T-cell (primary cell): ENCODE measurements at regions of chr17 and their contacts with region 1.

Region 1: DNA sequence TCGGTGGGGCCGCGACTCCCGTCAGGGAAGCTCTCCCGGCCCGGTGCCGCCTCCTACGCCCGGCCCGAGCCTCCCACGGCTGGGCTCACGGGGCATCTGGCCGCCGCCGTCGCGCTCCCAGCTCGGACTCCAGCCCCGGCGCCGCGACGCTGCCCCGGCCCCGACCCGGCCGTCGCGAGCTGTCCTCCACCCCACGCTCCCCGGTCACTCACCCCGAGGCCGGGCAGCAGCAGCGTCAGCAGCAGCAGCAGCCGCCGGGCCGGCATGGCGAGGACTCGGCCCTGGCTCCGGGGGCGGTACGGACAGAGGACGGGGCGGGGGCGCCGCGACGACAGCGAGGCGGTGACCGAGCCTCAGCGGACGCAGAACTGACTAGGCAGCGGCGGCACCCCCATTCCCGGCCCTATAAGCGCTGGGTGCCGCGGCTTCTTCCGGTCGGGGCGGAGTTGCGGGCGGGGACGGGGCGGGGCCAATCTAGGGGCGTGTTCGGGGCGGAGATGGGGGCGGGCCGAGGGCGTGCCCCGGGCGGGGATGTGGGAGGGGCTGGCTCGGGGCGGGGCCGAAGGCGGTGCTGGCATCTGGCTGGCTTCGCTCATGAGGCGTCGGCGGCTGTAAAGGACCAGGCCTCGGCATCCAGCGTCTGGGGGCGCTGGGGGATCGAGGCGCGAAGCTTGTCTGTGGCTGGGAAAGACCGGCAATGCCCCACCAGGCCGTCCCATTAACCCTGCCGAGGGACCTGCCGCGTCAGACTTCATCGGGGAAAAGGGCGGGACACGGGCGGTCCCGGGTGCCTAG is at the start of gene ERN1:
- DNase-seq: peak; percentile 78 to 94 (median 87)
- ATAC-seq: peak; percentile 86 to 90 (median 88)
- H3K4me3 ChIP-seq: peak within 1 kb of the TSS; percentile 79 to 85
- H3K4me3 Mint-ChIP-seq: peak within 1 kb of the TSS; percentile 88 to 94 (median 93)
- H3K27ac ChIP-seq: peak within 1 kb of the TSS; percentile 95
- H3K27ac Mint-ChIP-seq: peak within 1 kb of the TSS; percentile 94 to 95
- H3K4me1 ChIP-seq: peaks cover 17 to 34% of the 10 kb centered on the region in 2 experiments
- H3K4me1 Mint-ChIP-seq: peaks cover 44 to 57% (median 49%) of the 10 kb centered on the region in 3 donors
- H3K27me3 ChIP-seq: no peaks in the 10 kb centered on the region
- H3K27me3 Mint-ChIP-seq: no peaks in the 10 kb centered on the region
- total RNA-seq, gene ERN1: 71.2 to 146 (median 112) TPM

Region 2: GRCh38 chr17:63919311-63919723 is 210.6 kb before region 1 on chr17:
- CTCF ChIA-PET with region 1: interaction called, 3 to 20 read pairs
- POLR2A ChIA-PET with region 1: no interaction called
- DNase-seq: peak; percentile 37 to 89 (median 61)
- ATAC-seq: peak; percentile 91 to 99 (median 94)
- H3K4me3 ChIP-seq: no peak overlapping the region
- H3K4me3 Mint-ChIP-seq: no peak overlapping the region
- H3K27ac ChIP-seq: no peak overlapping the region
- H3K27ac Mint-ChIP-seq: peak overlapping the region; percentile 5 to 69
- H3K4me1 ChIP-seq: peaks cover 0 to 10% of the 10 kb centered on the region in 2 experiments
- H3K4me1 Mint-ChIP-seq: peaks cover 8 to 13% (median 9%) of the 10 kb centered on the region in 3 donors
- H3K27me3 ChIP-seq: peaks cover 0 to 7% of the 10 kb centered on the region in 2 experiments
- H3K27me3 Mint-ChIP-seq: peaks cover 3 to 4% of the 10 kb centered on the region in 2 donors

Region 3: DNA sequence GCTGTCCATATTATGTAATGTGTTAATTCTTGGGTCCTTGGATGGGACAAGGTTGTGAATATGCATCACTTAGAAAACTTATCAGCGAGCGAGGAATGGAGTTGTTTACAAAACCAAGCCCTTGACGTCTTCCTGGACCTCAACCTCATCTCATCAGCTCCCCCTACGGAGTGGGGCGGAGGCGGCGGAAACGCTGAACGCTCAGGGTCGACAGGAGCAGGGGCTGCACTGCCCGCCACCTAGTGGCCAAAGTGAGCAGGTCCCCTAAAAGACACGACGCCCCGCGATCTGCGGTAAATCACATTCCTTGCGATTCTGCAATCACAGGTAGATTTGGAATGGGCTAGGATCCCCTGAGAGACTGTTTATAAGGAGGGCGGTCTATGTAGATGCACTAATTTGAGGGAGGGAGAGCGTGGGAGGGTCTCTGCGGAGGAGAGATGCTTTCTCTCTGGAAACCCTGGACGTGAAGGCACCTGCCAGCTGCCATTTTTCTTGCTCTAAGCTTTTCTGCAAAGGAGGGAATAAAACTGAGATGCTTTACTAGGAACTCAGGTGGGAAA is 104.1 kb before region 1 on chr17:
- CTCF ChIA-PET with region 1: interaction called, 62 to 226 read pairs
- POLR2A ChIA-PET with region 1: interaction called, 4 to 6 read pairs
- DNase-seq: peak; percentile 87 to 98 (median 96)
- ATAC-seq: peak; percentile 84 to 87 (median 87)
- H3K4me3 ChIP-seq: peak overlapping the region; percentile 7 to 30
- H3K4me3 Mint-ChIP-seq: peak overlapping the region; percentile 76 to 80 (median 76)
- H3K27ac ChIP-seq: peak overlapping the region; percentile 98
- H3K27ac Mint-ChIP-seq: peak overlapping the region; percentile 96 to 100
- H3K4me1 ChIP-seq: peaks cover 39 to 71% of the 10 kb centered on the region in 2 experiments
- H3K4me1 Mint-ChIP-seq: peaks cover 69 to 75% (median 72%) of the 10 kb centered on the region in 3 donors
- H3K27me3 ChIP-seq: no peaks in the 10 kb centered on the region
- H3K27me3 Mint-ChIP-seq: no peaks in the 10 kb centered on the region

Region 4: GRCh38 chr17:64056269-64057005 is 73.5 kb before region 1 on chr17:
- CTCF ChIA-PET with region 1: interaction called, 3 to 107 read pairs
- POLR2A ChIA-PET with region 1: interaction called in 1 of 2 experiments, 7 read pairs
- DNase-seq: no peak
- ATAC-seq: peak; percentile 22 to 43 (median 38)
- H3K4me3 ChIP-seq: no peak overlapping the region
- H3K4me3 Mint-ChIP-seq: peak overlapping the region in 1 of 3 donors; percentile 5
- H3K27ac ChIP-seq: peak overlapping the region; percentile 34
- H3K27ac Mint-ChIP-seq: peak overlapping the region; percentile 86 to 91
- H3K4me1 ChIP-seq: peaks cover 9 to 47% of the 10 kb centered on the region in 2 experiments
- H3K4me1 Mint-ChIP-seq: peaks cover 30 to 88% (median 34%) of the 10 kb centered on the region in 3 donors
- H3K27me3 ChIP-seq: no peaks in the 10 kb centered on the region
- H3K27me3 Mint-ChIP-seq: no peaks in the 10 kb centered on the region

Region 5: DNA sequence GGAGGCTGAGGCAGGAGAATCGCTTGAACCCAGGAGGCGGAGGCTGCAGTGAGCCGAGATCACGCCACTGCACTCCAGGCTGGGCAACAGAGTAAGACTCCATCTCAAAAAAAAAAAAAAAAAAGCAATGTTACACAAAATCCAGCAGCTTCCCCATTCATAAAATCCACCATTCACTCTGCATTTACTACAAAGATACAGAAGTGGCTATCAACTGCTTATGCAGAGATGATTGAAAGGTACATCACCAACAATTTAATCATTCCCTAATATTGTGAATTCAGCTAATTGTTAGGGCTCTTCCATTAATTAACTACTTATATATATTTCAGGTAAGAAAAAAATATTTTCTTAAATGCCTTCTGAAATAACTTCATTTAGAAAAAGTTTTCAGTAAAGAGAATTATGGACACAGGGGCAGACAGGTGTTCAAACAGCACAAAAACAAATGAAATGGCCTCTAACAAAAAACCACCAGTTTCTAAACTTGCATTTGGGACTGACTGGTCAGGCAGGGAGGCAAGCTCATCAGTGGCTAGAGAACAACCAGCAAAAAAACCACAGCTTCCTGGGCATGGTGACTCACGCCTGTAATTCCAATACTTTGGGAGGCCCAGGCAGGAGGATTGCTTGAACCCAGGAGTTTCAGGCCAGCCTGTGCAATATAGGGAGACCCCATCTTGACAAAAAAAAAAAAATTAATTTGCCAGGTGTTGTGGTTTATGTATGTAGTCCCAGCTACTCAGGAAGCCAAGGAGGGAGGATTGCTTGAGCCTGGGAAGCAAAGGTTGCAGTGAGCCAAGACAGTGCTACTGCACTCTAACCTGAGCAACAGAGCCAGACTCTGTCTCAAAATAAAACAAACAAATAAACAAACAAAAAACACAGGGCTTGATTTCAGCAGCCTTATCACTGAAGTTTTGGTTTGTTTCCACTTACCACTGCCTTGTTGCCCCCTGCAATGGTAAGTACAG is 26.3 kb before region 1 on chr17:
- CTCF ChIA-PET with region 1: interaction called in 1 of 2 experiments, 10 read pairs
- POLR2A ChIA-PET with region 1: interaction called in 1 of 2 experiments, 3 read pairs
- DNase-seq: no peak
- ATAC-seq: no peak
- H3K4me3 ChIP-seq: no peak overlapping the region
- H3K4me3 Mint-ChIP-seq: no peak overlapping the region
- H3K27ac ChIP-seq: no peak overlapping the region
- H3K27ac Mint-ChIP-seq: peak overlapping the region; percentile 22 to 60
- H3K4me1 ChIP-seq: peaks cover 16 to 45% of the 10 kb centered on the region in 2 experiments
- H3K4me1 Mint-ChIP-seq: peaks cover 56 to 85% (median 59%) of the 10 kb centered on the region in 3 donors
- H3K27me3 ChIP-seq: no peaks in the 10 kb centered on the region
- H3K27me3 Mint-ChIP-seq: no peaks in the 10 kb centered on the region